Breast epithelium (tissue), 4 donors: ENCODE measurements at regions of chr4 and their contacts with region 1.

Region 1: GRCh38 chr4:83922402-83922801 is 386.5 kb downstream of the GPAT3 start:
- DNase-seq: no peak
- H3K4me3 ChIP-seq: no peak overlapping the region
- H3K27ac ChIP-seq: no peak overlapping the region
- H3K4me1 ChIP-seq: no peaks in the 10 kb centered on the region
- H3K27me3 ChIP-seq: no peaks in the 10 kb centered on the region
- CTCF ChIP-seq: no peak
- POLR2A ChIP-seq: no peak

Region 2: DNA sequence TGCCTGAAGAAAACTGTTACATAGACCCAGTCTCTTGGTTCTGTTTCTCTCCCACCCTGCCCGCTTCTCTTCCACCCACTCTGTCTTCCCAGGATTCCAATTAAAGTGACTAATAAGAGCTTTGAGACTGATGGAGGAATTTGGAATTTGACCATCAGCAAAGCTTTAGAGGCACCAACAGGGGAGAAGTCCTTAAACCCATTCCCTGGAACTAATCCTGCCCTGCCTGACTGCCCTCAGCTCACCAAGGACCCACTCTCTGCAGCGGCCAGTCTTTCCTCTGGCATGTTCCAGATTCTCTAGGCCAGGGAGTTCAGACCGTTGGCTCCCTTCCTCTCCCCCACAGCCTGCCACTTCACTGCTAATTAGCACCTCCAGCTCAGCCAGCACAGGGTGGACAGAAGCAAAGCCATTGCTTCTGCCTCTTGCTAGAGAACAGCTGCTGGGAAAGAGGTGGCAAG is 1147.7 kb before region 1 on chr4:
- intact Hi-C with region 1: loop called (anchors 10 kb)
- DNase-seq: no peak
- H3K4me3 ChIP-seq: no peak overlapping the region
- H3K27ac ChIP-seq: no peak overlapping the region
- H3K4me1 ChIP-seq: no peaks in the 10 kb centered on the region
- H3K27me3 ChIP-seq: no peaks in the 10 kb centered on the region
- CTCF ChIP-seq: no peak
- POLR2A ChIP-seq: no peak

Region 3: DNA sequence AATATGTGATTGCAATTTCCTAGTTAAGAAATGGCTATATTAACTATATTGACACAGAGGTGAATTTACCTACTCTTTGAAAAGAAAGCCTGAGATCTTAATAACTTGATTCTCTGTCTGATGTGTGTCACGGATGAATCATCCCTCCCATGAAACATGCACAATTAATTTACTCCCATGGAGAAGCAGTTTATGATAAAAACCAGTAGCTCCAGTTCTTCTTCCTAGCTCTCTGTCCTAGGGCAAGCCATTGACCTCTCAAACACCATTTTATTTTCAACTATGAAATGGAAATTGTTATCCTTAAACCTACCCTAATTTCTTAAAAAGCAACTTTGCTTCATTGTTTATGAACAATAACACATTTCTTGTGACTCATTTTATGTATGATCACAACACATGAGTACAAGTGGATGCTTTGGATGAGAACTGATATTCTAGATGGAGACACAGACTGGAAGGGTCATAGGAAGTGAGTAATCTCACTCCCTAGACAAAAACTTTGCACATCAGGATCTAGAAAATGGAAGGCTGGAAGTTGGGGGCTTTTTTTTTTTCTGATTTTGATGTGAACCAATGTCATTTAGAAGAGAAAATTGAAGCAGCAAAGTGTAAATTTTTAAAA is 51.9 kb after region 1 on chr4:
- intact Hi-C with region 1: no loop called
- DNase-seq: no peak
- H3K4me3 ChIP-seq: no peak overlapping the region
- H3K27ac ChIP-seq: no peak overlapping the region
- H3K4me1 ChIP-seq: no peaks in the 10 kb centered on the region
- H3K27me3 ChIP-seq: no peaks in the 10 kb centered on the region
- CTCF ChIP-seq: no peak
- POLR2A ChIP-seq: no peak

Region 4: DNA sequence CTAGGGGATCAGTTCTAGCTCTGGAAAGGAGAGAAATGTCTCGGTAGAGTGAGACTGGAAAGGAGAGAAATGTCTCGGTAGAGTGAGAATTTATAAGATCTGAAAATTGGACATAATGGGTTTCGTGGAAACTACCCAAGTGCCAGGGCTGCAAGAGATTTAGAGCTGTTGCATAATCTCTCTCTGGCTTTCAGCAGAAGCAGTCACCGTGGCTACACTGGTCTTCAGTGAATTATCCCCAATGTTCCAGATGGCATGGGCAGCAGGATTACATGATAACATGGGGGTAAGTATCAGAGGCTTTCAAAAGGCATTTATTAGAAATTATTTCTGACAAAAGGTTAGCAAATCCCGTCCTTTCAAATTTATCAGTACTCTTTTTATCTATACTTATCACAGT is 141.2 kb after region 1 on chr4:
- intact Hi-C with region 1: no loop called
- DNase-seq: no peak
- H3K4me3 ChIP-seq: no peak overlapping the region
- H3K27ac ChIP-seq: no peak overlapping the region
- H3K4me1 ChIP-seq: no peaks in the 10 kb centered on the region
- H3K27me3 ChIP-seq: no peaks in the 10 kb centered on the region
- CTCF ChIP-seq: no peak
- POLR2A ChIP-seq: no peak